Mammary epithelial cell (primary cell): ENCODE measurements at regions of chr11 and their contacts with region 1.

Region 1: DNA sequence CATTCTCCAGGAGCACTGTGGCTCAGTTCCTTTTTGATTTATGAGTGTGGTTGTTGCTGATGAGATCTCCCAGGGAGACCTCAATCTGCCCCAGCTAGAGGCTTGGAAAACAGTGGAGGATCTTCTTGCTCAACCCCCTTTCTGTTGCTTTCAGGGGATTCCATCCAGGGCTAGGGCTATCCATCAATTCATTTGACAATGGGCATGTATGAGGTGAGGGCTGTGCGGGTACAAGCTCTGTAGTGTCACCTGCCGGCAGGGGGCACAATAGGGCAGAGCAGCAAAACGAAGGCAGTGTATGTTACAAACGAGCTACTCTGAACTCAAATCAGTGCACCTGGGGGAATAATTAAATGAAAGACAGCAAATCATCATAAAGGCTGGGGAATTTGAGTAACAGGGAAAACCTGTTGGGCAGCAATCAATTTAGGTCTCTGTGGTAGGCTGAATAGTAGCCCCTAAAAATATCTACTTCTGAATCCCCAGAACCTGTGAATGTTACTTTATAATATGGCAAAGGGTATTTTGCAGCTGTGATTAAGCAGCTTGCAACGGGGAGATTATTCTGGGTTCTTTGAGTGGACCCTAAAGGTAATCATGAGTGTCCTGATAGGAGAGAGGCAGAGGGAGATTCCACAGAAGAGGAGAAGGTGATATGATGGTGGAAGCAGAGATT is 170.3 kb upstream of the ZBED5 start:
- DNase-seq: peak; percentile 50
- H3K4me3 ChIP-seq: no peak overlapping the region
- H3K27ac ChIP-seq: no peak overlapping the region
- H3K4me1 ChIP-seq: peaks cover 20% of the 10 kb centered on the region
- H3K27me3 ChIP-seq: no peaks in the 10 kb centered on the region
- CTCF ChIP-seq: peak; percentile 96

Region 2: DNA sequence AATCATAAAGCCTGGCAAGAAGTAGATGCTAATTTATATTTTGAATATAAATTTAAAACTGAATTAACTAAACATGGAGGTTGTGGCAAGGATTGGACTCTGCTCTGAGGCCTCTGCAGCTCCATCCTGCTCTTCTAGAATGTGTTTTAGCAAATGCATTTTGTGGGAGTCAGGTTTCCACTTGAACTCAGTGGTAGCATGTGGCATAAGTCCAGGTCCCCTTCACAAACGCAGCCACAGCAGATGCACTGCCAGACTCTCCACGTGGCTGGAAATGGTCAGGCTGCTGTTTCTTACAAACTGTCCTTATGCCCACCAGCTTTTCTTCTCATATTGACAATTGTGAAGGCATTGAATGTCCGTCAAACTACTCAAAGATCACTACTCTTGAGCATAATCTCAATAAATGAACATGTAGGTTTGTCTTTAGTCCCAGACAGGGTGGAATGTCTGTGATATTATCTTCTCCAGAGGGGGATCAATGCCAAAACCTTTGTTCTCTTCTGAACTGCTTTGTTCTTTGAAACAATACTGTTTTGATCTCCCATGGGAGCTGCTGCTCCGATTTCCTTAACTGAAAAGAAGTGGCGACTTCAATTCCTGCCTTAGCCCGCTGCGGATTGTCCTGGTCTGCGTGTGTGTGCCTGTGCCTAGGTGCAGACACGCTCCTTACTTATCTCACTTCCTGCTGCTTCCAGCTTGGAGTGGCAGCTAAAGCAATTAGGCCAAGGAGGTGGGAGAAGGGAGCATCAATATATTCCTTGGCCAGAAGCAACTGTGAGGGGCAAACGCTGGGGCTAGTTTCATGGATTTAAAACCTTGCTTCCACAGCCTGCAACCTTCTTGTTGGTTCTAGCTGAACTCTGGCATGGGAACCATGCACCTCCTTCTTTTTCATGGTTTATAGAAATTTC is 243.7 kb before region 1 on chr11:
- CTCF ChIA-PET with region 1: no interaction called
- dilution Hi-C with region 1: loop called (anchors 10 kb)
- in situ Hi-C with region 1: no loop called
- intact Hi-C with region 1: no loop called
- DNase-seq: no peak
- H3K4me3 ChIP-seq: no peak overlapping the region
- H3K27ac ChIP-seq: no peak overlapping the region
- H3K4me1 ChIP-seq: peaks cover 3% of the 10 kb centered on the region
- H3K27me3 ChIP-seq: no peaks in the 10 kb centered on the region
- CTCF ChIP-seq: no peak

Region 3: DNA sequence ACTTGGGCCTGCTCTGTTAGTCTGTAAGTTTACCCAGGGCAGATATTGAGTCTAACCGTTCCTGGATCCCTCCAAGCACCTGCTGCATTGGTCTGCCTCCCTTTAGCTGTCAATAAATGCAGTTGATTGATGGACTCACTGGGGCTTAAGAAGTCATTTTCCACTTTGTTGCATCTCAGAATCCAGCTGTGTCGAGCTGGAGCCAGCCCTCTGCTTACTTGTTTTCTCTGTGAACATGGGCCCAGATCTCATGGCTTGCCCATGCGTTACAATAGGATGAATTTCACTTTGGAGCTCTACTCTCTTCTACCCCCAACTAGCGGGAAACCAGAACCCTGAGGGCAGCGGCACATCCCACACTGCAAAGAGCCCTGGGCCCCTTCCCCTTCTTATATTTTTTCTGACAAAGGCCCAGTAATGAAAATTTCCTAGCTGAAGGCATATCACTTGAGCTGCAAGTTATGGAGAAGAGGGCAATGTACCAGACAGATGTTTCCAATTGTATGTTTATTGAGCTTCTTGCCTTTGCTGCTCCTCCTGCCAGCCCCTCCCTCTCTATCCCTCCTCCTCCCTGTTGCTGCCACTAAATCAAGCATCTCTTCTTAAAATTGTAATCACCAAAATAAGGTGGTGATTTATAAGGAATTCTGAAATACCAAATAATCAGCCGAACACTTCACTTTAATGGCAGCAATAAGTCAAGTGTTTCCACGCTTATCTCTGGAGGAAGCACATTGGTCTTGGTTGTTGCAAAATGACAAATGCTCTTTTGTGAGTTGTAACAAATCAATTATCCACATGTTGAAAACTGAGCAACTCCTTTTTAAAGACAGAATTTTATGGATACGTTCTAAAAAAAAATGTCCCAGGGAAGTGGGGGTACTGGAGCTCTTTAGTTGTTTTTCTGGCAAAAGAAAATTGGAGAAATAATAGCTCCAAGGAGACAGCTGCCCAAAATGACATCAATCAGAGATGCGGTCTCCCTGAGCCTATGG is 42.0 kb after region 1 on chr11:
- CTCF ChIA-PET with region 1: interaction called, 3 read pairs
- dilution Hi-C with region 1: no loop called
- in situ Hi-C with region 1: no loop called
- intact Hi-C with region 1: loop called (anchors 2 kb)
- DNase-seq: no peak
- H3K4me3 ChIP-seq: no peak overlapping the region
- H3K27ac ChIP-seq: no peak overlapping the region
- H3K4me1 ChIP-seq: peaks cover 12% of the 10 kb centered on the region
- H3K27me3 ChIP-seq: peaks cover 2% of the 10 kb centered on the region
- CTCF ChIP-seq: no peak

Region 4: DNA sequence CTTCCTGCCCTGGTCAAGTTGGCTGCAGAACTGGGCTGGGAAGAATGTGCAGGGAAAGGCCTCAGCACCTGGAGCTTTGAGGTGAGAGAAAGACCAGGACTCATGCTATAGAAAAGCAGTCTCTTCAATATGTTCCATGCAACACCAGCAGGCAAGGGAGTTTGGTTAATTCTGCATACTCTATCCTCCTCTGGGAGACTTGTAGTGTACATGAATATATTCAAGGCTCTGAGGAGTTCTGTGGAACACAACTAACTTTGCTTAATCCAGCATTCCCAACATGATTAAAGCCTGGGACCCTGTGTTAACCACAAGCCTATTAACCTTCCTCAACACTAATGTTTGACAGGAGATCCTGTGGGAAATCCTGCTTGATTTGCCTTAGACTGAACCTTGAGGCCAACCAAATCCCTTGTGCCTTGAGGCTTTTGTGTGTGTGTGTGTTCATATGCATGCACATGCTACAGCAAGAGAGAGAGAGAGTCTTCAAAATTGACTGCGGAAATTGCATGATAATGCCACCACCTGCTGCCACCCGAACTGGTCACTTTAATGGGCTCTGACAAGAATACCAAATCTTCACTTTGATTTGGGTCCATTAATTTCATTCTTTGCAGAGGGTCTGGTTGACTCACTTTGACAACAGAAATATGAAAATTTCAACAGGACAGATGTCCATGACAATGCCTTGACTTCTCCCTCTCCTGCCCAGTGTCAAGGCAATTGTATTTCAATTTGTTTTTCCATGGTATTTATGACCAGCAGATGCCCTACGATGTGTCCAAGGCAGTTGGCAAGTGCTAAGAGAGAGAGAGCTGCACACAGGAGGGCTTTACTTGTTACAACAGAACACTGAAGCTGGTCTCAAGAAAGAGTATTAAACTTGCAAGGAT is 67.9 kb after region 1 on chr11:
- CTCF ChIA-PET with region 1: no interaction called
- dilution Hi-C with region 1: no loop called
- in situ Hi-C with region 1: no loop called
- intact Hi-C with region 1: no loop called
- DNase-seq: no peak
- H3K4me3 ChIP-seq: no peak overlapping the region
- H3K27ac ChIP-seq: no peak overlapping the region
- H3K4me1 ChIP-seq: no peaks in the 10 kb centered on the region
- H3K27me3 ChIP-seq: peaks cover 11% of the 10 kb centered on the region
- CTCF ChIP-seq: no peak

Region 5: GRCh38 chr11:11313426-11313825 is 285.3 kb after region 1 on chr11:
- CTCF ChIA-PET with region 1: no interaction called
- dilution Hi-C with region 1: no loop called
- in situ Hi-C with region 1: no loop called
- intact Hi-C with region 1: loop called (anchors 5 kb)
- DNase-seq: peak; percentile 93
- H3K4me3 ChIP-seq: no peak overlapping the region
- H3K27ac ChIP-seq: peak overlapping the region; percentile 23
- H3K4me1 ChIP-seq: peaks cover 23% of the 10 kb centered on the region
- H3K27me3 ChIP-seq: no peaks in the 10 kb centered on the region
- CTCF ChIP-seq: no peak

Region 6: DNA sequence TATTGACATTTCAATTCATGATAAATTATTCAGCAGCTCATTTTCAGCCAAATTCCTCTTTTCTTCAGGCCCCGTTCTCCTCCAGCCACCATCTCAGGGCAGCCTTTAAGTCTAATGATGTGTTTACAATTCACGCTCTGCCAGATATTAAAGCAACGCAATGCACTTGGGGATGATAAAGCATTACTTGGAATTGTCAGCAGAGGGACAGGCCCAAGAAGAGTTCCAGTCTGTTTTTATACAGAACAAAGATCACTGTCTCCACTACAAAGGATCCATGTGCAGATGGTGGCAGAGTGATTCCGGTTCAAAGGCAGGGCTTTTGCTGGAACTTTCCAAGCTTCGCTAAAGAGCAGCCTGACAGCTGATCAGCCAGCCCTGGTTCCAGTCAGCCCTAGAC is 607.3 kb after region 1 on chr11:
- CTCF ChIA-PET with region 1: no interaction called
- dilution Hi-C with region 1: no loop called
- in situ Hi-C with region 1: loop called in 1 of 2 experiments (anchors 25 kb)
- intact Hi-C with region 1: no loop called
- DNase-seq: no peak
- H3K4me3 ChIP-seq: no peak overlapping the region
- H3K27ac ChIP-seq: no peak overlapping the region
- H3K4me1 ChIP-seq: no peaks in the 10 kb centered on the region
- H3K27me3 ChIP-seq: no peaks in the 10 kb centered on the region
- CTCF ChIP-seq: no peak

Region 7: GRCh38 chr11:11665407-11665806 is 637.3 kb after region 1 on chr11:
- CTCF ChIA-PET with region 1: interaction called, 4 read pairs
- dilution Hi-C with region 1: no loop called
- in situ Hi-C with region 1: loop called in 1 of 2 experiments (anchors 25 kb)
- intact Hi-C with region 1: loop called (anchors 2 kb)
- DNase-seq: no peak
- H3K4me3 ChIP-seq: no peak overlapping the region
- H3K27ac ChIP-seq: no peak overlapping the region
- H3K4me1 ChIP-seq: no peaks in the 10 kb centered on the region
- H3K27me3 ChIP-seq: peaks cover 8% of the 10 kb centered on the region
- CTCF ChIP-seq: no peak